Right ventricle myocardium inferior (tissue), 1 donor: ENCODE measurements at regions of chr2 and their contacts with region 1.

Region 1: GRCh38 chr2:222057347-222058073 is 241.3 kb downstream of the PAX3 start:
- DNase-seq: no peak
- ATAC-seq: peak; percentile 79

Region 2: DNA sequence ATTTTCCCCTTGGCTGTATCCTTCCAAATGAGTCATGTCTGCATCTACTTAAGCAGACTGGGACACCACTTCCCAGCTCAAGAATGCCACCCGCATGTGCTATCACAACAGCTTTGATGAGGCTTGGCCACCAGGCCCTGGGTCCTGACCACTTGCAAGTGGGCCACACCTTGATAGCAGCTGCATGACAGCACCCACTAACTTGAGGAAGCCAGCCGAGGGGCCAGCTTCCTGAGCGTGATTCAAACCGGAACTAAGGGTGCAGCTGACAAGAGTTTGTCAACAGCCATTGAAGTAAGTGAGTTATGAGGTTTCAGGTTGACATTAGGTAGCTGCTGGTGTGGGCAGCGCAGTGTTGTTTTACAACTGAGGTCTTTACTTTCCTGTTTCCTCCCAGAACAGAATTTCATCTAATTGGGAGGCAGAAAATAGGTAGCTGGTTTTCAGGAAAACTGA is 539.8 kb before region 1 on chr2:
- intact Hi-C with region 1: no loop called
- DNase-seq: no peak
- ATAC-seq: no peak

Region 3: GRCh38 chr2:222561817-222562645 is 504.5 kb after region 1 on chr2:
- intact Hi-C with region 1: loop called (anchors 5 kb)
- DNase-seq: no peak
- ATAC-seq: peak; percentile 63

Region 4: GRCh38 chr2:222613715-222614331 is 556.3 kb after region 1 on chr2:
- intact Hi-C with region 1: loop called (anchors 5 kb)
- DNase-seq: no peak
- ATAC-seq: no peak